ENCODE measurements at regions of chr1 and their contacts with region 1.

Region 1: GRCh38 chr1:228849011-228849541 is 113.8 kb downstream of the RHOU start:
- DNase-seq: peak; percentile 59
- ATAC-seq: peak; percentile 83
- H3K4me3 ChIP-seq: no peak overlapping the region
- H3K27ac ChIP-seq: no peak overlapping the region
- H3K4me1 ChIP-seq: no peaks in the 10 kb centered on the region
- H3K27me3 ChIP-seq: no peaks in the 10 kb centered on the region
- CTCF ChIP-seq: no peak
- EP300 ChIP-seq: peak; percentile 64 to 68; a peak in 2 of 4 replicates
- POLR2A ChIP-seq: no peak
- RAD21 ChIP-seq: no peak

Region 2: GRCh38 chr1:228515200-228515834 is 333.8 kb before region 1 on chr1:
- CTCF ChIA-PET with region 1: no interaction called
- POLR2A ChIA-PET with region 1: no interaction called
- RAD21 ChIA-PET with region 1: no interaction called
- SMC1A ChIA-PET with region 1: no interaction called
- in situ Hi-C with region 1: no loop called
- intact Hi-C with region 1: no loop called
- DNase-seq: no peak
- ATAC-seq: peak; percentile 51; the same call in 2 of the 3 replicates
- H3K4me3 ChIP-seq: no peak overlapping the region
- H3K27ac ChIP-seq: no peak overlapping the region
- H3K4me1 ChIP-seq: no peaks in the 10 kb centered on the region
- H3K27me3 ChIP-seq: no peaks in the 10 kb centered on the region; a peak in 3 of 4 replicates
- CTCF ChIP-seq: peak; percentile 50 to 69 (median 55); a peak in 4 of 6 replicates
- EP300 ChIP-seq: no peak
- POLR2A ChIP-seq: no peak
- RAD21 ChIP-seq: peak; percentile 77

Region 3: DNA sequence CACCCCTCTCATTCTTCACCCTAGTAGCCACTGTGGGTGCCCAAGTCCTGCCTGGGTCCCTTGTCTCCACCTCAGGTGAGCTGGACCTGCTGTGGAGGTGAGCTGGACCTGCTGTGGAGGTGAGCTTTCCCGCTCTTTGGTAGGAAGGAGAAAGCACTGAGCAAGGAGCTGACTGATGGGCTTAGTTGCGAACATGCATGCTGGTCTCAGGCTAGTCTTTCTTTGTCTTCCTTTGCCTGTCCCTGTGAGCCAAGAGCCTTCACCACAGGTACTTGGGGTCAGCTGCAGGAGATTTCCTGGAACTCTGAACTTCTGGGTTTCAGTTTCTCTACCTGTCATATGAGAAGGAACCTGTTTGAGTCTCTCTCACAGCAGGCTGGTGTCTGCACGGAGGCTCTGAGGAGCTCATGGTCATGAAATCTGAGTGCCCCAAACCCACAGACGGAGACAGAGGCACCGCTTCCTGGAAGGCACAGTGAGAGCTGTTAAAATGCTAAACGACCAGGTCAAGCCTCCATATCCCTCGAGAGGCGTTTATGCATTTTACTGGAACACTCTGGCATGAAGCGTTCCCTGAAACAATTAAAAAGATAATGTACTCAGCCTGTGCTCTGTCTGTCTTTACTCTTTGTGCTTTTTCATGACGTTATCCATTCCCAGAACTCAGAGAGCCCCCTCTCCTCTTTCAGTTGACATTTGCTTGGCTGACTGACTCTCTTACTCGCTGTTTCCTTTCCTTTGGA is 44.2 kb before region 1 on chr1:
- CTCF ChIA-PET with region 1: no interaction called
- POLR2A ChIA-PET with region 1: no interaction called
- RAD21 ChIA-PET with region 1: interaction called, 6 read pairs
- SMC1A ChIA-PET with region 1: interaction called, 3 read pairs
- in situ Hi-C with region 1: no loop called
- intact Hi-C with region 1: loop called (anchors 5 kb)
- DNase-seq: no peak
- ATAC-seq: peak; percentile 33; the same call in 1 of the 3 replicates
- H3K4me3 ChIP-seq: no peak overlapping the region
- H3K27ac ChIP-seq: no peak overlapping the region
- H3K4me1 ChIP-seq: no peaks in the 10 kb centered on the region
- H3K27me3 ChIP-seq: peaks cover 0 to 2% of the 10 kb centered on the region in 2 experiments; a peak in 3 of 4 replicates
- CTCF ChIP-seq: no peak
- EP300 ChIP-seq: no peak
- POLR2A ChIP-seq: no peak
- RAD21 ChIP-seq: no peak

Region 4: GRCh38 chr1:228825840-228826484 is 23.1 kb before region 1 on chr1:
- CTCF ChIA-PET with region 1: interaction called, 5 read pairs
- POLR2A ChIA-PET with region 1: interaction called, 3 read pairs
- RAD21 ChIA-PET with region 1: interaction called, 18 read pairs
- SMC1A ChIA-PET with region 1: interaction called, 22 read pairs
- in situ Hi-C with region 1: no loop called
- intact Hi-C with region 1: loop called (anchors 1 kb)
- DNase-seq: no peak
- ATAC-seq: peak; percentile 76
- H3K4me3 ChIP-seq: no peak overlapping the region
- H3K27ac ChIP-seq: no peak overlapping the region
- H3K4me1 ChIP-seq: peaks cover 4% of the 10 kb centered on the region
- H3K27me3 ChIP-seq: no peaks in the 10 kb centered on the region
- CTCF ChIP-seq: no peak
- EP300 ChIP-seq: no peak
- POLR2A ChIP-seq: no peak
- RAD21 ChIP-seq: no peak

Region 5: GRCh38 chr1:228830954-228831481 is 18.1 kb before region 1 on chr1:
- CTCF ChIA-PET with region 1: interaction called, 5 read pairs
- POLR2A ChIA-PET with region 1: no interaction called
- RAD21 ChIA-PET with region 1: interaction called, 18 read pairs
- SMC1A ChIA-PET with region 1: interaction called, 22 read pairs
- in situ Hi-C with region 1: no loop called
- intact Hi-C with region 1: loop called (anchors 1 kb)
- DNase-seq: peak; percentile 46
- ATAC-seq: peak; percentile 87
- H3K4me3 ChIP-seq: no peak overlapping the region
- H3K27ac ChIP-seq: no peak overlapping the region
- H3K4me1 ChIP-seq: peaks cover 4% of the 10 kb centered on the region
- H3K27me3 ChIP-seq: 0 out of 4 replicates have a peak, but pooled peaks cover 1 to 5% of the 10 kb centered on the region in 2 experiments
- CTCF ChIP-seq: no peak
- EP300 ChIP-seq: peak; percentile 65 to 82; a peak in 2 of 4 replicates
- POLR2A ChIP-seq: no peak
- RAD21 ChIP-seq: no peak

Region 6: DNA sequence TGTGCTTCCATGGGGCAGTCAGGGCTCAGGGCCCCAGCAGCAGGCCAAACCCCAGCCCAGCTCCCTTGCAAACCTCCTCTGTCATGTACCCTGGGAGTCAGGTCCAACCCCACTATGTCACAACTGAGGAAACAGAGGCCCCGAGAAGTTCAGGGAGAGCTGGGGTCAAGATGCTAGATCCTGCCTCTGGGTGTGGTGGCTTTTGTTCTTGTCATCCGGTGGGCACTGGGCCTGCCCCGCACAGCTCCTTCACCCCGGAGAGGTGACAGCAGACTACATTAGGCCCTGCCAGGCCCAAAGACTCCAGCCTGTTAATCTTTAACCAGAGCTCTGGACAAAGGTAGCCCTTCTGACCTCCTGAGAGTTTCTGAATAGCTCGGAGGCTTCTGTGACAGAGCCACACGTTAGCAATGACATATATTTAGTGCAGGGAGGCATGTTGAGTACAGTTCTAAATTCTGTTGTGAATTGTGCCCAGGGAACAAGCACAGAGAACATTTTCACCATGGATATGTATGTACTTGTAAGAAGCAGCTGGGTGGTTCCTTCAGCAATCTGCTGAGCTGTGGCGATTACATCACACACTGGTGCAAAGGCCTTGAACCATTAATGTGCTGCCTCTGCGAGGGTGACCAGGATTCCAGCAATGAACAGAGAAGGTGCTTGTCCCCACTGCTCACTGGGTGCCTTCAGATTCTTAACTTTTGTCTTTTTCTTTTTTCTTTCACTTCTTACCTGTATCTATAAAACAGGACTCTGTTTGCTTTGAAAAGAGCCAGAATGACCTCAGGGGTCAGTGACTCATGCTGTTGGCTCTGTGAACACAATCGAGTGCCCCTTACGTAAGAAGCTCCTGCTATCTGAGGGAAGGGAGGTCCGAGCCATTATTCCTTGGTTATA is 11.0 kb before region 1 on chr1:
- CTCF ChIA-PET with region 1: interaction called, 4 read pairs
- POLR2A ChIA-PET with region 1: interaction called, 5 read pairs
- RAD21 ChIA-PET with region 1: interaction called, 22 read pairs
- SMC1A ChIA-PET with region 1: interaction called, 23 read pairs
- in situ Hi-C with region 1: no loop called
- intact Hi-C with region 1: no loop called
- DNase-seq: no peak
- ATAC-seq: peak; percentile 80
- H3K4me3 ChIP-seq: no peak overlapping the region
- H3K27ac ChIP-seq: no peak overlapping the region
- H3K4me1 ChIP-seq: no peaks in the 10 kb centered on the region
- H3K27me3 ChIP-seq: 0 out of 4 replicates have a peak, but pooled peaks cover 2 to 5% of the 10 kb centered on the region in 2 experiments
- CTCF ChIP-seq: no peak
- EP300 ChIP-seq: no peak
- POLR2A ChIP-seq: no peak
- RAD21 ChIP-seq: no peak

Region 7: DNA sequence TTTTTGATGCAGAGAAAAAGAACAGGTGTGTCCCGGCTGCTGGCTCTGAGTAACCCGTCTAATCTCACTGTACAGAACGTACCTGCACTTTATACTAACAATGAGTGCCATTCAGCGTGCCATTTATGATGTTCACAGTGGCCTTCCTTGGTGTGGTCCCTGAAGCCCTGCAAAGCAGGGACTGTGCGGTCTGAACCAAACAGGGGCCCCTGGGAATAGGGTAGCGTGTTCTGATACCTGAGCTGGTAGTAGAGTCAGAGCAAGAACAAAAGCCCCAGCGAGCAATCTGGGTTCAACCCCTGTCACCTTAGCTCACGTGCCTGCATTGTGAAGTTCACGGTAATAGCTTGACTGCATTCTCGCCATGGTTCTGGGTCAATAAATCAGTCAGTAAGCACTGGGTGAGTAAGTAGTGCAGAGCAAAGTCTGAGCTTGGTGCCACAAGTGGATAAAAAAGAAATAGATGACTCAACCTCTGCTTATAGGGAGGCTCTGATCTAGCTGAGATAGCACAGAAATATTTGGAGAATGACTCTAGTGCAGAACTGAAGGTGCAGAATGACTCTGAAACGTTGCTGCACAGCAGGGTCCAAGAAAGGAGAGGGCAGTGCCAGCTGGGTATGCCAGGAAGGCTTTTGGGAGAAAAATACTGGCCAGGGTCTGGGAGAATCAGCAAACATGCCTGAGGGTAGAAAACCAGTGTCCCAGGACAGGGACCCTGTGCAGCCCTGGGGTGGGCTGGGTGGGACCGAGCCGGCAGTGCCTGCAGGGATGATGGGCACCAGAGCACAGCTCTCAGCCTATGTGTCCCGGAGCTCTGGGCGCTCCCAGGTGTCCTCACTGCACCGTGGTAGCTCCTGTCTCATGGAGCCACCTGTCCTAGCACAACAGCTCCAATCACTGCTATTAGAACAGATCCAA is 12.1 kb after region 1 on chr1:
- CTCF ChIA-PET with region 1: no interaction called
- POLR2A ChIA-PET with region 1: interaction called, 5 read pairs
- RAD21 ChIA-PET with region 1: interaction called, 33 read pairs
- SMC1A ChIA-PET with region 1: interaction called, 21 read pairs
- in situ Hi-C with region 1: no loop called
- intact Hi-C with region 1: no loop called
- DNase-seq: peak; percentile 44
- ATAC-seq: peak; percentile 88
- H3K4me3 ChIP-seq: no peak overlapping the region
- H3K27ac ChIP-seq: no peak overlapping the region
- H3K4me1 ChIP-seq: no peaks in the 10 kb centered on the region
- H3K27me3 ChIP-seq: peaks cover 0 to 4% of the 10 kb centered on the region in 2 experiments; a peak in 2 of 4 replicates
- CTCF ChIP-seq: no peak
- EP300 ChIP-seq: no peak
- POLR2A ChIP-seq: no peak
- RAD21 ChIP-seq: no peak